Activated naive CD4-positive, alpha-beta T cell treated with anti-CD3 and anti-CD28 coated beads for 36 hours (primary cell): ENCODE measurements at regions of chr15 and their contacts with region 1.

Region 1: DNA sequence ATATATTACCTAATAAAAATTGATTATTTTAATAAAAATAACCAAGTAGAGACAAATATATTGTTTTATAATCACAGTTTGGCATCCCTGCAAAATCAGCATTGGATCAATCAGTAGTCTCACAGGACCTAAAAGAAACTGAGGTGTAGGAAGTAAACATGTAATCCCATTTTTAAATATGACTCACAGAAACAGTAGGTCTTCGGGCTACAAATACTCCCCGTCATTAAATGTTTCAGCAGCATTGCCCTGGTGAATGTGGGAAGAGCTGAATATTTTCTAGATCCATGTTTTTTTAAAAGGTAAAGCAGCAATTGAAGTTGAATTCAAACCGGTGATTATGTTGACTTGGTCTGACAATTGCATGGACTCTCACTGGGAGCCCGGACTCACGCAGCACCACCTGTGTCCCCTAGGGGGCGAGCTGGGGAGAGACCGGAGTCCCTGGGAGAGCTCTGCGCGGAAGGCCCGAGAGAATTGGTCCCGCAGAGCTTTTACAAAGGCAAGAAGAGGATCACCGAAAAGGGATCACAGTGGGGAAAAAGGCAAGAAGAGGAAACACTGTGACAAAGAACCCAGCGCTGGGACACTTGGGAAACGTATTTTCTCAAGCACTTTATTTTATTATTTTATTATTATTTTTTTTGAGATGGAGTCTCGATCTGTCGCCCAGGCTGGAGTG is 17.2 kb upstream of the USP3 start:
- DNase-seq: peak; percentile 95
- H3K4me3 Mint-ChIP-seq: peak overlapping the region; percentile 51
- H3K27ac Mint-ChIP-seq: no peak overlapping the region
- H3K4me1 Mint-ChIP-seq: peaks cover 71% of the 10 kb centered on the region
- H3K27me3 Mint-ChIP-seq: no peaks in the 10 kb centered on the region

Region 2: GRCh38 chr15:63497642-63498467 is 10.6 kb after region 1 on chr15:
- CTCF ChIA-PET with region 1: interaction called, 33 read pairs
- intact Hi-C with region 1: loop called (anchors 1 kb)
- DNase-seq: peak; percentile 81
- H3K4me3 Mint-ChIP-seq: no peak overlapping the region
- H3K27ac Mint-ChIP-seq: no peak overlapping the region
- H3K4me1 Mint-ChIP-seq: peaks cover 82% of the 10 kb centered on the region
- H3K27me3 Mint-ChIP-seq: no peaks in the 10 kb centered on the region

Region 3: GRCh38 chr15:63509955-63510940 is 23.0 kb after region 1 on chr15:
- CTCF ChIA-PET with region 1: interaction called, 16 read pairs
- intact Hi-C with region 1: no loop called
- DNase-seq: no peak
- H3K4me3 Mint-ChIP-seq: peak overlapping the region; percentile 69
- H3K27ac Mint-ChIP-seq: peak overlapping the region; percentile 85
- H3K4me1 Mint-ChIP-seq: peaks cover 86% of the 10 kb centered on the region
- H3K27me3 Mint-ChIP-seq: no peaks in the 10 kb centered on the region

Region 4: DNA sequence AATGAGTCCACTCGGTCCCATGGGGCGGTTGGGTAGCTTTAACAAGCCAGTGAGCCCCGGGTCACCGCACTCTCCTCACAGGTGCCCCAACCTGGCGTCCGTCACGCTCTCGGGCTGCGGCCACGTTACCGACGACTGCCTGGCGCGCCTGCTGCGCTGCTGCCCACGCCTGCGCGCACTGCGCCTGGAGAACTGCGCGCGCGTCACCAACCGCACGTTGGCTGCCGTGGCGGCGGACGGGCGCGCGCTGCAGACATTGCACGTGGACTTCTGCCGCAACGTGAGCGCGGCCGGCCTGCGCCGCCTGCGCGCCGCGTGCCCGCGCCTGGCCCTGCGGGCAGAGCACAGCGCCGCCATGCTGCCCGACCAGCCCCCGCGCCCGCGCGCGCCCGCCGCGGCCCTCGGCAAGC is 113.4 kb after region 1 on chr15:
- CTCF ChIA-PET with region 1: interaction called, 19 read pairs
- intact Hi-C with region 1: no loop called
- DNase-seq: peak; percentile 87
- H3K4me3 Mint-ChIP-seq: peak overlapping the region; percentile 90
- H3K27ac Mint-ChIP-seq: peak overlapping the region; percentile 93
- H3K4me1 Mint-ChIP-seq: peaks cover 54% of the 10 kb centered on the region
- H3K27me3 Mint-ChIP-seq: no peaks in the 10 kb centered on the region

Region 5: GRCh38 chr15:64521726-64522164 is 1034.5 kb after region 1 on chr15:
- CTCF ChIA-PET with region 1: no interaction called
- intact Hi-C with region 1: no loop called
- DNase-seq: no peak
- H3K4me3 Mint-ChIP-seq: no peak overlapping the region
- H3K27ac Mint-ChIP-seq: no peak overlapping the region
- H3K4me1 Mint-ChIP-seq: peaks cover 67% of the 10 kb centered on the region
- H3K27me3 Mint-ChIP-seq: no peaks in the 10 kb centered on the region